ENCODE measurements at regions of chr1 and their contacts with region 1.

Region 1: DNA sequence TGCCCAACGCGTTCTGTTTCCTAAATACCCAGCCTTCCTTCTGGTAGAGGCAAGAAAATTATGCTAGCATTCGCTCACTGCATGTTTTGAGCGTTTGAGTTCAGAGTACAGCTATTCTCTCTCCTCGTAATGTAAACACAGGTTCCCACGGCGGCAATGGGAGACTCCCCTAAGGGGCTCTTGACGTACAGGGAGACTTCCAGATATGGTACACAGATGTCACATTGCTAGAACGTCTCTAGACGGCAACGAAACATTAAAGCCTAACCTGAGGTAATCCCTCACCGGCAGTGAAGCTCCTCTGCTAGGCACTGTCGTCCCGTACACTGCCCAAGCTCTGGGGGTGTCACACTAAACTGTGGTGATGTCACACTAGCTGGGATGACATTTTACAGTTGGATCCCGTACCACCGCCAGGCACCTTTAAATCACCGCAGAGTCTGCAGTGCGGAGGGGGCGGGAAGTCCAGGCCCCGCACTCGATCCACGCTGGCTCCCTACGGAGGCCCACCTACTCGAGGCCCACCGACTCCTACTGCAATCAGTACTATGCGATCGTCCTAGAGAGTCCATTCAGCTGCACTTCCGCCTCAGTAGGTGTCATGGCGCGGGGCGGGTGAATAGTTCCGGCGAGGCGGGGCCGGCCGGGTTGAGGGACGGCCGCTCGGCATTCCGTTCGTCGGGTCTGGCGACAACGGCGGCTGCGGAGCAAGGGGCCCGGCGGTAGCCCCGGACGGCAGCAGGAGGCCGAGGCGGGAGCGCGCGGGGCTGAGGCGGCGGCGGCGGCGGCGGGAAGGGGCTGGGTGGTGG is at the start of gene HIPK1:
- DNase-seq: peak; percentile 65
- H3K4me3 ChIP-seq: peak within 1 kb of the TSS; percentile 98
- H3K27ac ChIP-seq: peak within 1 kb of the TSS; percentile 82
- H3K27me3 ChIP-seq: no peaks in the 10 kb centered on the region
- CTCF ChIP-seq: no peak
- polyA plus RNA-seq, gene HIPK1: 28.4 and 31.3 TPM in 2 replicates

Region 2: DNA sequence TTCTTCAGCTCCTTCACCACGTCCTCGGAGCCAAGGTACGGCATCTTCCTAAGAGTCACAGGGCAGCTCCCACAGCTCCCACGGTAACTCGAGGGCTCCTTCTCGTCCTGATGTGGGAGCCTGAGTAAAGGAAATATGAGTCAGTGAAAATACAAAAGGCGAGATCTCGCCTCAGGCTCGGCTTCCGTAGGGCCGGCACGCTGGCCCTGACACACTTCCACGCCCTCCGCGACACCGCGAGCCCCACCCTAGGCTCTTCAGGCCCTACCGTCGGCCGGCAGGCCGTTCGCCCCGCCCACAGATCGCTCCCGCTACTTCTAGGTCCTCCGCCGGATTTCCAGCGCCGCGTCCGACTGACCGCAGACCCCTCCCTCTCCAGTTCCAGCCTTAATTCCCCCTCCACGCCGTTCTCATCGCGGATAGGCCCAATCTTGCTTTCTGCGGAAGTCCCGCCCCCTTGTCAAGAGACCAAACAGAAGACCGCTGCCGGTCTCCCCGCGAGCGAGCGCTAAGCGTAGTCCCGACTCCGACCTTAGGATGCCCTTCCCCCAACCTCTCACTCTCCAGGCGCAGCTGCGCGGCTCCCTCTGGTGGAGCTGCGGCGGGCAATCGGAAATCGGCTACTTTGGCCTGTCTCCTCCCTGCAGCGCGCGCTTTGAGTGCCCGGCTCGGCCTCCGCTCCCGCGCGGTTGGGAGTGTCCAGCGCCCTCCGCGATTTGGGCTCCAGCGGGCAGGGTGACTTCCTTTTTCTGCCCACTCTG is 24.3 kb before region 1 on chr1 and contains the starts of genes AP4B1 and DCLRE1B:
- CTCF ChIA-PET with region 1: interaction called, 27 read pairs
- POLR2A ChIA-PET with region 1: interaction called, 54 read pairs
- DNase-seq: peak; percentile 100
- H3K4me3 ChIP-seq: peak within 1 kb of the TSS; percentile 85
- H3K27ac ChIP-seq: peak within 1 kb of the TSS; percentile 85
- H3K27me3 ChIP-seq: no peaks in the 10 kb centered on the region
- CTCF ChIP-seq: peak; percentile 75
- polyA plus RNA-seq, gene AP4B1: 13.6 and 16.5 TPM in 2 replicates
- polyA plus RNA-seq, gene DCLRE1B: 2.7 and 3.2 TPM in 2 replicates

Region 3: DNA sequence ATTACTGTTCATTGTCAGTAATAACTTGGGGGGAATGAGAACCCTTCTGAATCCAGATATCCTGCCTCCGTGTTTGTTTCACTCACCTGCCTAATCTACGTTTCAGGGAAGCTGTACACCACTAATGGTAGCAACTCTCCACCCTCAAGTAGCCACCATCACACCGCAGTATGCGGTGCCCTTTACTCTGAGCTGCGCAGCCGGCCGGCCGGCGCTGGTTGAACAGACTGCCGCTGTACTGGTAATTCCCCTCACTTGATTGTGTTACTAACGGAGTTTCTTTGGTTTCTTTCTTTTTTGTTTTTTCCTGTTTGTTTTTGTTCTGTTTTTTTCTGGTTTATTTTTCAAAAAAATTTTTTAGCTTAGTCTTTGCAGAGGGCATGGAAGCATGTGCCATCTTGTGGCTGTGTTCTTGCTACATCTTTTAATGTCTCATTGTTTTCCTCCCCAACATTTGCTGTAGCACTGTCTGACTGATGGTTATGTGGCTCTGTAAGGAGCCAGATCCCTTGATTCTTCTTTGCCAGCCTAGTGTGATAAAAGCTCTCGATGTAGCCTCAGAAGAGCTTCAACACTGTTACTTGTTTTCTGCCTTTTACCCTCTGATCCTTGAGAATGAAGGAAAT is 34.2 kb after region 1 on chr1:
- CTCF ChIA-PET with region 1: interaction called, 10 read pairs
- POLR2A ChIA-PET with region 1: interaction called, 3 read pairs
- DNase-seq: no peak
- H3K4me3 ChIP-seq: no peak overlapping the region
- H3K27ac ChIP-seq: no peak overlapping the region
- H3K27me3 ChIP-seq: no peaks in the 10 kb centered on the region
- CTCF ChIP-seq: peak; percentile 30

Region 4: DNA sequence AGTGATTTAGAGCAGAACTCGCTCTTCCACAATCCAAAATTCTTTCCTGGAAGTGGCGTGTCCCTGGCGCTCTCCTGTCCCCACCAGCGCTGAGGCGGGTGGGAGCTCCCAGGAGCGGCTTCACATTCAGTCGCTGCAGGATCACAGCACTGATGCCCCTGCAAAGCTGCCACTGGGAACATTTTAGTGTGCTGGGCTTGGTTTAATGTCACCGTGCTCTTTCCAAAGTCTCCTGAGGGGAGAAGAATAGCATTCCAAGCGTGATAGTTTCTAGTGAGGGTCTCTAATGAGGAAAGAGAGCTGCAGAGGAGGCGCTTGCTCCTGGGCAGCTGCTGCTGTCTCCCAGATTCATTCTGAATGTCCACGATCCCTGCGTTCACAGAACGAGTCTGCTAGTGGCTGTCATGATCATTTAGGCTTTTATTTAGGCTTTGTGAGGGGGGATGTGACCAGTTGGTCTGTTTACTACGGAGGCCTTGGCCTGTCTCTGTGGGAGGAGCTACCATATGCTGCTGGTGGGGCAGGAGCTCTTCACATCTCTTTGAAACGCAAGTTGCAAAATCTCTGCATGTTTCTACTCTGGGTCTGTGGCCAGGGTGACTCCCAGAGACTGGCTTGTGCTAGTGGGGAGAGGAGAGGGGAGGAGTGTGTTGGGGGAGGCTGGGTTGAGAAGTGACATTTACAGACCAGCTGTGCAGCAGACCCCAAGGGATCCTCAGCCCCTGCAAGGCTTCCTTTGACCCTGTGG is 73.5 kb after region 1 on chr1:
- CTCF ChIA-PET with region 1: no interaction called
- POLR2A ChIA-PET with region 1: no interaction called
- DNase-seq: no peak
- H3K4me3 ChIP-seq: no peak overlapping the region
- H3K27ac ChIP-seq: no peak overlapping the region
- H3K27me3 ChIP-seq: peaks cover 8% of the 10 kb centered on the region
- CTCF ChIP-seq: no peak

Region 5: DNA sequence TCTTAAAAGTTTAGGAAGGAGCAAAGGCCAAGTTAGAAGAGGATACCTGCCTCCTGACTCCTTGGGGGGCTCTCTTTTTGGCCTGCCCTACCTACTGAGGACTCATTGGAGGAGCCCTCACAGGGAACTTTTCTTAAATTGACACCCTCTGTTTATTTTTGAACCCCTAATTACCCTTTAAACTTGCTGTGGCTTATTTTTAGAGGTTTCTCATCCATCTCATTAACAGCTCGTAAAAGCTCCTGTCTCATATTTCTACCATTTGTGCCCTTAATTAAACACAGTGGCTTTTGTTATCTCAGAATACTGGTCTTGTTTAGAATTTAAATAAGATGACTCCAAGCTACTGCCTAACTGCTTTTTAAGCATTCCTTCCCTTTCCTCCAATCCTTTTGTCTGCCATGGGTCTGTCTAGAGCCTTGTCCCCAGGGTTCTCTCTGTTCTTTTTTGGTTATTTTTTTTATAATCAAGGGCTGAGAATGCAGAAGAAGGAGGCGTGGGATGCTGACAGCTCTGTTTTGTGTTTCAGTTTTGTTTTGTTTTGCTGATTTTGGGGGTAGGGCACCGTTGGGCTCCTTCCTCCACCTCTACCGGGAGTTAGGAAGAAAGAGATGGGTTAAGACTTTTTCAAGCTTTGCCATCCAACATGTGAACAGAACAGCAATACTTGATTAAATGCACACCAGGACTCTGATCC is 146.5 kb after region 1 on chr1:
- CTCF ChIA-PET with region 1: no interaction called
- POLR2A ChIA-PET with region 1: no interaction called
- DNase-seq: no peak
- H3K4me3 ChIP-seq: no peak overlapping the region
- H3K27ac ChIP-seq: no peak overlapping the region
- H3K27me3 ChIP-seq: peaks cover 12% of the 10 kb centered on the region
- CTCF ChIP-seq: no peak

Measured in AG04450 (cell line).